WTC11 (cell line): ENCODE measurements at regions of chr11 and their contacts with region 1.

Region 1: DNA sequence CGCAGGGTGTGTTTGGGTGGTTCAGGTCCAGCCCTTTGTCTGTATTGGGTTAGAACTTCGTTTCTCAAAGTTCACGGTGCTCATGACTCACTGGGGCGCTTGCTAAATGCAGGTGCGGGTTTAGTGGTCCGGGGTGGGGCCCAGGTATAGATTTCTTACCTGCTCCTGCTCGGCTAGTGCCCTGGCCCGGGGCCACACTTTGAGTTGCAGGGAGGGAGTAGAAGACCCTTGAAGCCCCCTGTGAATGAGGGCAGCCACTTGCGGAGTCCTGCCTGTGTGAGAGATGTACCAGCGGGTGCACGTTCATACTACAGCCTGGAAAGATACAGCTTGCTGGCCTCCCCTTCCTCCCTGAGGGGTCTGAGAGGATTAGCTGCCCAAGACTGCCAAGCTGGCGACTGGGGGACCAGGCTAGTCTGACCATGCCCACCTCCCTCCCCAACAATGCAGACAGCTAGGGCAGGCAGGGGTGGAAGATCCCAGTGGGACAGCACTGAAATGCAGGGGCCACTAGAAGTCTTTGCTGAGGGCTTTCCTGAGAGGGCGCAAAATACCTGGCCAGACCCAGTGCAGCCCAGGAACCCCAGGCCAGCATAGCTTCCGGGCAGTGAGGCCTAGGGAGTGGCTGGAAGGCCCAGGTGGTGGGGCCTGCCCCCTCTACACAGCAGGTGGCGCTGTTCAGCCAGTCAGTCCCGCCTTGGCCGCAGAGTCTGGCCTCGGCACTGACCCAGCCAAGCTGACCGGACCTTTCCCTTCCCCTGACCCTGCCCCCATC is 5.1 kb upstream of the MYRF start:
- DNase-seq: peak; percentile 88
- ATAC-seq: peak; percentile 81
- H3K4me3 Mint-ChIP-seq: no peak overlapping the region
- H3K27ac Mint-ChIP-seq: no peak overlapping the region
- H3K4me1 Mint-ChIP-seq: peaks cover 10% of the 10 kb centered on the region
- H3K27me3 Mint-ChIP-seq: peaks cover 20% of the 10 kb centered on the region
- CTCF ChIP-seq: peak; percentile 85

Region 2: GRCh38 chr11:61587521-61588453 is 159.6 kb before region 1 on chr11:
- CTCF ChIA-PET with region 1: interaction called, 13 read pairs
- POLR2A ChIA-PET with region 1: no interaction called
- DNase-seq: peak; percentile 96
- ATAC-seq: peak; percentile 80
- H3K4me3 Mint-ChIP-seq: peak overlapping the region; percentile 74
- H3K27ac Mint-ChIP-seq: no peak overlapping the region
- H3K4me1 Mint-ChIP-seq: peaks cover 34% of the 10 kb centered on the region
- H3K27me3 Mint-ChIP-seq: peaks cover 59% of the 10 kb centered on the region
- CTCF ChIP-seq: no peak

Region 3: GRCh38 chr11:61616434-61616833 is 130.9 kb before region 1 on chr11:
- CTCF ChIA-PET with region 1: no interaction called
- POLR2A ChIA-PET with region 1: no interaction called
- DNase-seq: no peak
- ATAC-seq: no peak
- H3K4me3 Mint-ChIP-seq: no peak overlapping the region
- H3K27ac Mint-ChIP-seq: no peak overlapping the region
- H3K4me1 Mint-ChIP-seq: peaks cover 15% of the 10 kb centered on the region
- H3K27me3 Mint-ChIP-seq: no peaks in the 10 kb centered on the region; the same call in 1 of the 2 replicates
- CTCF ChIP-seq: no peak

Region 4: DNA sequence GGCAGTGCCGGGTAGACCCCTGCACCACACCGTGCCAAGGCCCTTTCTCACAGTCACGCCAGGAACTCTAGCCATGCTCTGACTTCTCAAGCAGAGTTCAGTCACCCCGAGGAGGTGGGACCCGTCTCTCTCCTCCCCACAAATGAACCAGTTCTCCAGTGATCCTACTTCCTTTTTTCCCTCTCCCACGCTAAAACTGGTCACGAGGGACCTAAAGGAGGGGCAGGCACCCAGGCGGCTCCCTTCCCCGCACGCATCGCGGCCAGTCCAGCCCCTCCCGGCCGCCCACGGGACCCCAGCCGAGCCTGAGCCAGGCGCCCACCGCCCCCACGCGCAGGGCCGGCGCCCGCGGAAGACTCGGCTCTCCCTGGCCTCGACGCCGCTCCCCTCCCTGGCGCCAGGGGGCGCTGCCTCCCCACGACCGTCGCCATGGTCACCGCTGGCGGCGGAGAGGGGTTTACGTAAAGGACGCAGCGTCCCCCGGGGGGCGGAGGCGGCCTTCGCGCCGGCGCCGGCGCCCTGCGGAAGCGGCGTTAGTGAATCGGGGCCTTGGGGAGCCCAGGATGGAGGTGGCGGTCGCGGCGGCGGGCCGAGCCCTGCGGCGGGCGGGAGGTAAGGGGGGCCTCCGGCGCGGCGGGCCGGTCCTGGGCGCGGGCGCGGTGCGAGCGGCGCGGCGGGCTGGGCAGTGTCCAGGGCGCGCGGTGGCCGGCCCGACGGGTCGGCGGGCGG is 67.3 kb before region 1 on chr11 and contains the start of gene DAGLA:
- CTCF ChIA-PET with region 1: interaction called, 14 read pairs
- POLR2A ChIA-PET with region 1: no interaction called
- DNase-seq: peak; percentile 72
- ATAC-seq: peak; percentile 69
- H3K4me3 Mint-ChIP-seq: peak within 1 kb of the TSS; percentile 65
- H3K27ac Mint-ChIP-seq: no peak within 1 kb of the TSS
- H3K4me1 Mint-ChIP-seq: peaks cover 15% of the 10 kb centered on the region
- H3K27me3 Mint-ChIP-seq: peaks cover 8% of the 10 kb centered on the region
- CTCF ChIP-seq: peak; percentile 96
- total RNA-seq, gene DAGLA: 3.1 to 3.4 TPM (median 3.4 TPM) in 3 replicates

Region 5: GRCh38 chr11:61695917-61696316 is 51.5 kb before region 1 on chr11:
- CTCF ChIA-PET with region 1: interaction called, 17 read pairs
- POLR2A ChIA-PET with region 1: no interaction called
- DNase-seq: no peak
- ATAC-seq: peak; percentile 51
- H3K4me3 Mint-ChIP-seq: no peak overlapping the region
- H3K27ac Mint-ChIP-seq: no peak overlapping the region
- H3K4me1 Mint-ChIP-seq: peaks cover 49% of the 10 kb centered on the region
- H3K27me3 Mint-ChIP-seq: no peaks in the 10 kb centered on the region; the same call in 1 of the 2 replicates
- CTCF ChIP-seq: no peak

Region 6: DNA sequence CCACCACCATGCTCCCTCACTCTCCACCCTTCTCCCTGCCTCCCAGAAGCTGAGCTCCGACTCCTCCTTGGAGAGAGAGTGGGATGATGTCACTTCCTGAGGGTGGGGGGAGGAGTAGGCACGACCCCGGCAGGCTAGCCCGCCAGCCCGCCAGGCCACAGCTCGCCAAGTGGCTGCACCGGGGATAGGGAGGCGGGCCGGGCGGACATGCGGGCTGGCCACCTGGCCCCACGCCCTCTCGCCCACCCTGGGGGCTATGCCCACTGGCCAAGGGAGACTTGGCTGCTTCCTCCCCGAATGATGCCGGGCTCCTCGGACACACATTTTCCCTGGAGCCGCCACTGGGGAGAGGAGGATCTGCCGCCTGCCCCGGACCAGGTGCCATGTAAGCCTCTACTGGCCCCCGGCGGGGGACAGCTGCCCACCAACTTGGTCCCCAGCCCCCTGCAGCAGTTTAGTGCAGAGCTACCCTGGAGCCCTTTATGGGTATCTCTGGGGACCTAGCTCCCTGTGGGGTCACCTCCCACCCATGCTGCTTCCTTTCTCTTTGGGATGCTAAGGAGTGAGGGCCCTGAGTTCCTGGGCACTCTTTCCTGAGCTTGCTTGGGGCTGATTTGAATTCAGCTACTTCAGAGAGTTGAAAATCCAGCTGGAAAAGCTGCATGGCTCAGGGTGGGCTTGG is 28.6 kb before region 1 on chr11:
- CTCF ChIA-PET with region 1: interaction called, 31 read pairs
- POLR2A ChIA-PET with region 1: no interaction called
- DNase-seq: peak; percentile 73
- ATAC-seq: peak; percentile 79
- H3K4me3 Mint-ChIP-seq: peak overlapping the region; percentile 61
- H3K27ac Mint-ChIP-seq: peak overlapping the region; percentile 32; the same call in 1 of the 2 replicates
- H3K4me1 Mint-ChIP-seq: peaks cover 36% of the 10 kb centered on the region
- H3K27me3 Mint-ChIP-seq: peaks cover 3% of the 10 kb centered on the region; the same call in 1 of the 2 replicates
- CTCF ChIP-seq: no peak

Region 7: GRCh38 chr11:61776551-61777075 is 29.2 kb after region 1 on chr11:
- CTCF ChIA-PET with region 1: interaction called, 106 read pairs
- POLR2A ChIA-PET with region 1: no interaction called
- DNase-seq: peak; percentile 84
- ATAC-seq: peak; percentile 67
- H3K4me3 Mint-ChIP-seq: no peak overlapping the region
- H3K27ac Mint-ChIP-seq: no peak overlapping the region
- H3K4me1 Mint-ChIP-seq: peaks cover 14% of the 10 kb centered on the region
- H3K27me3 Mint-ChIP-seq: peaks cover 7% of the 10 kb centered on the region; the same call in 1 of the 2 replicates
- CTCF ChIP-seq: peak; percentile 54

Region 8: DNA sequence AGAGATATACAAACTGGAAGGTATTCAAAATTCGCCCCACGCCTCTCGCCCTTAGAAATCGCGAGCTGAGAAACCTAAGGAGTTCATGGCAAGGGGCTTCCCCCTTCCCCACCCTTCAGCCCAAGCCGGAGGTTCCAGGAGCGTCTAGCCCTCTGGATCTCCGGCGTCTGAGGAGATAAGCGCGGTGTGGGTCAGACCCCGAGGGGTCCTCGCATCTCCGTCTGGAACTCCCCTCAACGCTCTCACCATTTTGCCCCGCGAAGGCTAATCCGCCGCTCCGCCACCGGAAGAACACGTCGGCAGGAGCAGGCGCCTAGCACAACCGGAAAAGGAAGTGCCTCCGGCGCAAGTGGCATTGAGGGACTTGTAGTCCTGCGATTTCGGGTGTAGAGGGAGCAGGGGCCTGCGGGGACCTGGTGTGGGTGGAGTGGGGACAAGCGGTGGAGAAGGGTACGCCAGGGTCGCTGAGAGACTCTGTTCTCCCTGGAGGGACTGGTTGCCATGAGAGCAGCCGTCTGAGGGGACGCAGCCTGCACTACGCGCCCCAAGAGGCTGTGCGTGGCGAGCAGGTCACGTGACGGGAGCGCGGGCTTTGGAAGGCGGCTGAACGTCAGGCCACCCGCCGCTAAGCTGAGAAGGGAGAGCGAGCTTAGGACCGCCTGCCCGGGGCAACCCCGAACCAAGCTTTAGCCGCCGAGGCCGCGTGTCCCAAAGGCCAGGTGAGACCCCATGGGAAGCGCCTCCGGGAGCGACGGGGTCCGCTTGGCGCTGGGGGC is 45.1 kb after region 1 on chr11 and contains the starts of genes FEN1 and TMEM258:
- CTCF ChIA-PET with region 1: interaction called, 175 read pairs
- POLR2A ChIA-PET with region 1: interaction called, 3 read pairs
- DNase-seq: peak; percentile 88
- ATAC-seq: peak; percentile 77
- H3K4me3 Mint-ChIP-seq: peak within 1 kb of the TSS; percentile 94
- H3K27ac Mint-ChIP-seq: peak within 1 kb of the TSS; percentile 100
- H3K4me1 Mint-ChIP-seq: peaks cover 21% of the 10 kb centered on the region
- H3K27me3 Mint-ChIP-seq: no peaks in the 10 kb centered on the region; the same call in 1 of the 2 replicates
- CTCF ChIP-seq: no peak
- total RNA-seq, gene FEN1: 72.3 to 96.3 TPM (median 73.2 TPM) in 3 replicates
- total RNA-seq, gene TMEM258: 175 to 192 TPM (median 190 TPM) in 3 replicates

Region 9: DNA sequence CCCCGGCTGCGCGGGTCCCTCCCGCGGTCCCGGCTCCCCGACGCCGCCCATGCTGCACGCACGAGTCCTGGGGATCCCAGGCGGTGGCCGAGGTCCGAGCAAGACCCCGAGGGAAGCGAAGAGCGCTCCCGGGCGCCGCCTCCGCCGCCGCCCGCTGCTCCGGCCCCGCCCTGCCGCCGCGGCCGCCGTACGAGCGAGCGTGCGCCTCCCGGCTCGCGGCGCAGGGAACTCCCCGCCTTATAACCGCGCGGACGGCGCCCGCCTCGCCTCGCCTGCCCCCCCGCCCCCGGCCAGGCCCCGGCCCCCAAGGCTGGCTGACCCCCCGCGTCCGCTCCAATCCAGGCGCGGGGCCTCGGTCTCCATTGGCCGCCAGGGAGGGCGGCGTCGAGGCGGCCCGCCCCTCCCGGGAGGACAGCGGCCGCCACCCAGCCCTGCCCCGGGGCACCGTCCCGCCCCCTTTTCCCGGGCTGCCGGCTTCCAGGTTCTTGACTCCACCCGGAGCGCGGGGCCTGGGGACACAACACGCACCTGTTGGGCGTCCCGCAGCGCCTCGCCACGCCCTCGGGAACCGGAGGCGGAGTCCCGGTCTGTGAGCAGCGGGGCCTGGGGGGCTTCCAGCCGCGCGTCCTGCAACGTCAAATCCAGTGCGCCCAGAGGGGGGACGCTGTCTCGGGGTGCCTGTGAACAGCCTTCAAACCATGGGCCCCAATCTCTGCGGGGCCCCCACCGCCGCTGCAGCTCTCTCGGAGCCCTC is 144.1 kb after region 1 on chr11 and contains the start of gene FADS3:
- CTCF ChIA-PET with region 1: no interaction called
- POLR2A ChIA-PET with region 1: no interaction called
- DNase-seq: peak; percentile 88
- ATAC-seq: peak; percentile 85
- H3K4me3 Mint-ChIP-seq: peak within 1 kb of the TSS; percentile 69
- H3K27ac Mint-ChIP-seq: no peak within 1 kb of the TSS
- H3K4me1 Mint-ChIP-seq: peaks cover 3% of the 10 kb centered on the region
- H3K27me3 Mint-ChIP-seq: 0 out of 2 replicates have a peak, but pooled peaks cover 4% of the 10 kb centered on the region
- CTCF ChIP-seq: no peak
- total RNA-seq, gene FADS3: 47.4 to 50.0 TPM (median 49.3 TPM) in 3 replicates

Region 10: DNA sequence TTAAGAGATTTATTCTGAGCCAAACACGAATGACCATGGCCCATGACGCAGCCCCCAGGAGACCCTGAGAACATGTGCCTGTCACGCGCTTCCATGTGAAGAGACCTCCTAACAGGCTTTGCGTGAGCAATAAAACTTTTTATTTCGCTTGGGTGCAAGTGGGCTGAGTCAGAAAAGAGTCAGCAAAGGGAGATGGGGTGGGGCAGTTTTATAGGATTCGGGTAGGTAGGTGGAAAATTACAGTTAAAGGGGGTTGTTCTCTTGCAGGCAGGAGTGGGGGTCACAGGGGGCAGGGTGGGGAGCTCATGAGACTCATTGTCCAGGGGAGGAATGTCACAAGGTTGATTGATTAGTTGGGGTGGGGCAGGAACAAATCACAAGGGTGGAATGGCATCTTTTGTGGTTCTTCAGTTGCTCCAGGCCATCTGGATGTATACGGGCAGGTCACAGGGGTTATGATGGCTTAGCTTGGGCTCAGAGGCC is 297.3 kb after region 1 on chr11:
- CTCF ChIA-PET with region 1: no interaction called
- POLR2A ChIA-PET with region 1: no interaction called
- DNase-seq: no peak
- ATAC-seq: no peak
- H3K4me3 Mint-ChIP-seq: no peak overlapping the region
- H3K27ac Mint-ChIP-seq: no peak overlapping the region
- H3K4me1 Mint-ChIP-seq: no peaks in the 10 kb centered on the region
- H3K27me3 Mint-ChIP-seq: no peaks in the 10 kb centered on the region; the same call in 1 of the 2 replicates
- CTCF ChIP-seq: no peak